AG04450 (cell line): ENCODE measurements at regions of chr3 and their contacts with region 1.

Region 1: DNA sequence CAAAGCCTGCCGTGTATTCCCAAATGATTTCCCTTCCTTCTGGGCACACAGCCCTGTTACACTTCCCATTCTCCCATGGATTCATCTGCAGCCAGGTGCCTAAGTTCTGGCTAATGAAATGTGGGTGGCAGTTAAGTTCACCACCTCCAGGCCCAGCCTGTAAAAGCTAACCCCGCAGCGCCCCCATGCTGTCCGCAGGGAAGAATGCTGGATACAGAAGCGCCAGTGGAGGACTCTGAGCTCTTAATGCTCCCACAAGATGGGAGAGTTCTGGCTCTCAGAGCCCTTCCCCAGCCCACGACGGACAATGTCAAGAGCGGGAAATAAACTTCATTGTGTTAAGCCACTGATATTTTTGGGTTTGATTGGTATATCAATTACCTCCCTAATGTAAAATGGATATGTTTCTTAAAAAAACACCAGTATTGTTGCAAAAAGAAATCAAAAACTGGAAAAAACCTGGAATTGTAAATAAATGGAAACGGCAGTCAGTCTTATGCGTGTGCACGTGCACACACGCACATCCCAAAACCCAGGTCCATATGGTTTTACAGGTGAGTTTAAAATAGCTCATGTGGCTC is 37.7 kb upstream of the FGD5 start:
- DNase-seq: peak; percentile 3
- H3K4me3 ChIP-seq: no peak overlapping the region
- H3K27ac ChIP-seq: no peak overlapping the region
- H3K27me3 ChIP-seq: peaks cover 2% of the 10 kb centered on the region
- CTCF ChIP-seq: peak; percentile 56

Region 2: GRCh38 chr3:14641346-14641745 is 139.7 kb before region 1 on chr3:
- CTCF ChIA-PET with region 1: no interaction called
- POLR2A ChIA-PET with region 1: no interaction called
- DNase-seq: no peak
- H3K4me3 ChIP-seq: no peak overlapping the region
- H3K27ac ChIP-seq: no peak overlapping the region
- H3K27me3 ChIP-seq: peaks cover 8% of the 10 kb centered on the region
- CTCF ChIP-seq: no peak

Region 3: GRCh38 chr3:14672588-14672987 is 108.4 kb before region 1 on chr3:
- CTCF ChIA-PET with region 1: interaction called, 127 read pairs
- POLR2A ChIA-PET with region 1: no interaction called
- DNase-seq: no peak
- H3K4me3 ChIP-seq: no peak overlapping the region
- H3K27ac ChIP-seq: no peak overlapping the region
- H3K27me3 ChIP-seq: no peaks in the 10 kb centered on the region
- CTCF ChIP-seq: no peak

Region 4: GRCh38 chr3:14678015-14678503 is 103.0 kb before region 1 on chr3:
- CTCF ChIA-PET with region 1: interaction called, 127 read pairs
- POLR2A ChIA-PET with region 1: no interaction called
- DNase-seq: no peak
- H3K4me3 ChIP-seq: no peak overlapping the region
- H3K27ac ChIP-seq: no peak overlapping the region
- H3K27me3 ChIP-seq: no peaks in the 10 kb centered on the region
- CTCF ChIP-seq: no peak

Region 5: DNA sequence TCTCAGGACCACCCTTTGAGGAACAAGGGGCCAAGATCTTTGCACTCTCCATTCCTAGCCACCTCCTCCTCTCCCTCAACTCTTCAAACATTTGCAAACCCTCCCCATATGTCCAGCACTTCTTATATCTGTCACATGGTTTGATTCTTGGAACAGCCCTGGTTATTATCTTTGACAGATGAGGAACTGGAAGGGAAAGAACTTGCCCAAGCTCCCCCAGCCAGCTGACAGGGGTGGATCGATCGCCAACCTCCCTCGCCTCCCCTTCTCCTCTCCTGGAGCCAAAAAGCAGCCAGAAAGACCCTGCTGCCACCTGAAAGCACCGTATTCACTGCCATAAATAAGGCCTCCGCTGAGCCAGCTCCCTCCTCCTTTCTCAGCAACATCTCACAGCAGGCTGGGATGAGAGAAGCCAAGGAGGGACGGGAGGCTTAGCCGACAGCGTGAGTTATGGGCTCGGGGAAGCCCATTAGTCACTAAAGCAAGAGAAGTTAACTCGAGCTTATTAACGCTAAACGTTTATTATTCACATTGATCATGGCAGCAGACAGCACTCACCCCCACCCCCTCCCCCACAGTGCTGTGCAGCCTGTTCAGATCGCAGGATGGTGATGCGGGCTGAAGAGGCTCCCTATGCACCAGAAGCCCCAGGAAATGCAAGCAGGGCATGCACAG is 15.5 kb after region 1 on chr3:
- CTCF ChIA-PET with region 1: interaction called, 10 read pairs
- POLR2A ChIA-PET with region 1: no interaction called
- DNase-seq: no peak
- H3K4me3 ChIP-seq: no peak overlapping the region
- H3K27ac ChIP-seq: no peak overlapping the region
- H3K27me3 ChIP-seq: peaks cover 18% of the 10 kb centered on the region
- CTCF ChIP-seq: no peak

Region 6: DNA sequence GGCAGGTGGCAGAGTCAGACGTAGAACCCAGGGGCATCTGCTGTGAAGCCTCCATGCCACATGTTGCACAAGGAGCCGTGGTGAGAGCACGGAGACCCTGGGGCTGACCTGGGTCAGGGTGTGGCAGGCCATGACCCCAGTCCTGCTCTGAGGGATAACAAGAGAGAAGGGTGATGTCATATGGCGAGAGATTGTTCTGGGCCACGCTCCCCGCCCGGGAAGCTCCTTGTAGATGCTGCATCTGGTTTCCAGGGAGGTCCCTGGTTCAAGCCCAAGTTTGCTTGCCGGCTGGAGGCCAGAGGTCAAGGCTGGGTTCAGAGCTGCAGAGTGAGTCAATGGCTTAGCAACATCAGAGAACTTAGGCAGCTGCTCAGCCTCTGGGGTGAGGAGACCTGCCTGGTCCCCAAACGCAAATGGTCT is 55.0 kb after region 1 on chr3:
- CTCF ChIA-PET with region 1: no interaction called
- POLR2A ChIA-PET with region 1: no interaction called
- DNase-seq: no peak
- H3K4me3 ChIP-seq: no peak overlapping the region
- H3K27ac ChIP-seq: no peak overlapping the region
- H3K27me3 ChIP-seq: peaks cover 17% of the 10 kb centered on the region
- CTCF ChIP-seq: no peak